ENCODE measurements at regions of chr2 and their contacts with region 1.

Region 1: DNA sequence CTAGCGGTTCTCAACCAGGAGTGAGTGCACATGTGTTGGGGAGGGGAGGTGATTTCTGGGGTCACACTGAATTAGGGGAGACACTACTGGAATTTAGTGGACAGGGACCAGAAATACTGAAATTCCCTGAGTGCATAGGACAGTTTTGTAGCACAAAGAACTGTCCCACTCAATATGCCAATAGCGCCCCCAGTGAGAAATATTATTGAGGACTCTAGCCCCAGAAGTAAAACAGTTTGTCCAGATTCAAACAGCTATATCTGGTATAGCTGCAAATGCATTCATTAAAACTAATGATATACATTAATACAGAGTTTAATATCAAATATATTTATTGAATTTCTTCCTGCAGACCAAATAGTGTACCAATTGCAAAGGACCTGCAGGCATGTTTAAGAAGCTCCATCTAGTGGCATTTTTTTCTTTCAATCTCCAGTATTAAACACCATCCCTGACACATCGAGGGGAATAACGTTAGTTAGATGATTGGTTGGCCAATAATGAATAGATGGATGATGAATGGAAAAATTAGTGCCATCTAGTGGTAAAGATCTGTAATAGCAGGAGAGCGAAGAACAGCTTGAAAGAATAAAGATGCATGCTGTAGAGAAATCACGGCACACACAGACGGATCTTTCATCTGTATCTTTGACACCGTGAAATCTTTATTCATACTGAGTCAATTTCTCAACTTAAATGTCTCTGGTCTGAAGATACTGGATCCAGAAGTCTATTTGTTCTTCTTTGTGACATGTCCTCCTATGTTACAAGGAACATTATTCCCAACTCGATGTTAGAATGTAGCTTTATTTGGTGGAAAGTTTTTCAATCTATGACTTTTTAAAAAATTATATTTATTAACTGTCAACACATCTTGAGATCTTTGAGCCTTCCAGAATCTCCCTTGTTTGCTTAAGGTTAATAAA is 62.5 kb downstream of the DHRS9 start:
- DNase-seq: no peak
- H3K4me3 Mint-ChIP-seq: no peak overlapping the region
- H3K27ac Mint-ChIP-seq: no peak overlapping the region
- H3K4me1 Mint-ChIP-seq: no peaks in the 10 kb centered on the region
- H3K27me3 Mint-ChIP-seq: no peaks in the 10 kb centered on the region

Region 2: DNA sequence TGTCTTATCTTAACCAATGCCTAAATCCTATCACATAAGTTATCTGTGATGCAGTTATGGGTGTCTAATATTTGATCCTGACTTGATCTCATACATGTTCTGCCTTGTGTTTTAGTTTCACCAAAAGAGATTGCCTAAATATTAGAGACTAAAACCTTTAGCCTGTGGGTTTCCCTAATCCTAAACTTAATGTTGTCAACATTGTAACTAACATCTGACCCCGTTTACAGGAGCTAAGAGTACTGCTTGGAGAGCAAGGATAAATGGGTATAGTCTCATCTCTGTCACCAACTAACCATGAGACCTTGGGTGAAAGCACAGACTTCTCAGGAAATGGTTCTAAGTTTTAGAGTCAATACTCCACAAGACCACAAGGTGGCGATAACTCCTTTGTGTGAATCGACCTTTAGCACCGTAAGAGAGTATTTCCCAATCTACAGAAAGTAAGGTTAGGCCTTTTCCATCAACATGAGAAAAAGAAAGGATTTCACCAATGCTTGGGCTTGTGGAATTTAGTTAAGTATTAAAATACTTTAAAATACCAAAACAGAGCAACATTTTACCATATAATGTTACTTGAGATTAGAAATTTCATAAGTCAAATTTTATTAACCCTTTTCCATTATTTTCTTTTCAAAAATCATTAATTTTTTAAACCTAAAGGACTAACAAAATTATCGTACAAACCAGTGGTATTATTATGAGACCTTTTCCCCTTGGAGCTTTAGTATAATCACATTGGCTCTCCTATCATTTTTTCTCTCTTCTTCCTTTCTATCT is 170.2 kb before region 1 on chr2:
- CTCF ChIA-PET with region 1: interaction called, 42 read pairs
- DNase-seq: peak; percentile 24
- H3K4me3 Mint-ChIP-seq: no peak overlapping the region
- H3K27ac Mint-ChIP-seq: no peak overlapping the region
- H3K4me1 Mint-ChIP-seq: peaks cover 18% of the 10 kb centered on the region
- H3K27me3 Mint-ChIP-seq: peaks cover 12% of the 10 kb centered on the region

Region 3: DNA sequence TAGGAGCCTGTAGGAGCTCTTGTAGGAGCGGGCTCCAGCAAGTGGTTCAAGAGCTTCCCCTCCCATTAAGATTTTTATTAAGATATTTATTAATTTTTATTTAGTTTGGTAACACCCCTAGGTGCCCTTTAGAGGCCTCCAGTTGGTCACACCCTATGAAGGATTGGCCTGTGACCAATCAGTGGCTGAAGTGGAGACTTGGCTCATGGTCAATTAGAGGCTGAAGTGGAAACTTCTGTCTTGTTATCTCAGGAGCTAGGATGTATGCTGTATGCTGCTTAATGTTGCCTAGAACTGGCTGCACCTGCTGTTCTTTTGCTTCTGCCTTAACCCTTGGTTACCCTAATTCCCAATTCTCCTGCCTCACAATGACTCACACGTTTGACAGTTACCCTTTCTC is 13.8 kb before region 1 on chr2:
- CTCF ChIA-PET with region 1: interaction called, 21 read pairs
- DNase-seq: no peak
- H3K4me3 Mint-ChIP-seq: no peak overlapping the region
- H3K27ac Mint-ChIP-seq: no peak overlapping the region
- H3K4me1 Mint-ChIP-seq: no peaks in the 10 kb centered on the region
- H3K27me3 Mint-ChIP-seq: peaks cover 42% of the 10 kb centered on the region